ENCODE measurements at regions of chr18 and their contacts with region 1.

Region 1: DNA sequence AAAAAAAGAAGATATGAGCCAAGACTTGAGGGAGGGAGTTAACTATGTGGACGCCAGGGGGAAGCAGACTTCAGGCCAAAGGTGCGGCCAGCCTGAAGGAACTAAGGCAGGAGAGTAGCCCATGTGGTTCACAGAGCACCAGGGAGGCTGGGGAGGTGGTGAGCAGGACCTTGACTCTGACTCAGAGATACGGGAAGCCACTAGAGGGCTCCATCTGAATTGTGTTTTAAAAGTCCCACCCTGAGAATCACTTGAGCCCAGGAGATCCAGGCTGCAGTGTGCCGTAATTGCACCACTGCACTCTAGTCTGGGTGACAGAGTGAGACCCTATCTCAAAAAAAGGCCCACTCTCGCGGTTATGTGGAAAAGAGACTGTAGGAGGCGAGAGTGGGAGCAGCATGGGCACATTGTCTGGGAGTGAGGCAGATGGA is 12.3 kb downstream of the CEP192 start:
- DNase-seq: peak; percentile 29
- H3K4me3 ChIP-seq: no peak overlapping the region
- H3K27ac ChIP-seq: no peak overlapping the region
- H3K27me3 ChIP-seq: no peaks in the 10 kb centered on the region
- CTCF ChIP-seq: peak; percentile 57

Region 2: DNA sequence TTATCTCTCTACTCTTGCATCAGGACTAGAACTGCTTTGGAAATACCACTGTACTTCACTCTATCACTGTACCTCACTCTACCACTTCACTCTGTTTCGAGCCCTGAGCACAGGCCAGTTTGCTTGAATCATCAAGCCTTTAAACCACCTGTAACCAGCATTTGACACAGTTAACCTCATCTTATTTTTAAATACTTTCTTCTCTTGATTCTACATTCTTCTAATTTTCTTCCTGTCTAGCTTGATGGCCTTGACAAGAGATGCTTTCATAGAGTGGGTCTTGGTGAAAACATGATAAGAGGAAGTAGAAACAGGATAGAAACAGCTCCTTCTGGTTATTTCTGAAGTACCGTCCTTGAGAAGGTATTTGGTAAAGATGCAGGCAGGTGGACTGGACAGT is 423.7 kb before region 1 on chr18:
- CTCF ChIA-PET with region 1: no interaction called
- POLR2A ChIA-PET with region 1: no interaction called
- DNase-seq: no peak
- H3K4me3 ChIP-seq: no peak overlapping the region
- H3K27ac ChIP-seq: no peak overlapping the region
- H3K27me3 ChIP-seq: no peaks in the 10 kb centered on the region
- CTCF ChIP-seq: no peak

Region 3: GRCh38 chr18:12737243-12737902 is 266.1 kb before region 1 on chr18:
- CTCF ChIA-PET with region 1: interaction called, 10 read pairs
- POLR2A ChIA-PET with region 1: no interaction called
- DNase-seq: no peak
- H3K4me3 ChIP-seq: no peak overlapping the region
- H3K27ac ChIP-seq: no peak overlapping the region
- H3K27me3 ChIP-seq: no peaks in the 10 kb centered on the region
- CTCF ChIP-seq: no peak

Region 4: DNA sequence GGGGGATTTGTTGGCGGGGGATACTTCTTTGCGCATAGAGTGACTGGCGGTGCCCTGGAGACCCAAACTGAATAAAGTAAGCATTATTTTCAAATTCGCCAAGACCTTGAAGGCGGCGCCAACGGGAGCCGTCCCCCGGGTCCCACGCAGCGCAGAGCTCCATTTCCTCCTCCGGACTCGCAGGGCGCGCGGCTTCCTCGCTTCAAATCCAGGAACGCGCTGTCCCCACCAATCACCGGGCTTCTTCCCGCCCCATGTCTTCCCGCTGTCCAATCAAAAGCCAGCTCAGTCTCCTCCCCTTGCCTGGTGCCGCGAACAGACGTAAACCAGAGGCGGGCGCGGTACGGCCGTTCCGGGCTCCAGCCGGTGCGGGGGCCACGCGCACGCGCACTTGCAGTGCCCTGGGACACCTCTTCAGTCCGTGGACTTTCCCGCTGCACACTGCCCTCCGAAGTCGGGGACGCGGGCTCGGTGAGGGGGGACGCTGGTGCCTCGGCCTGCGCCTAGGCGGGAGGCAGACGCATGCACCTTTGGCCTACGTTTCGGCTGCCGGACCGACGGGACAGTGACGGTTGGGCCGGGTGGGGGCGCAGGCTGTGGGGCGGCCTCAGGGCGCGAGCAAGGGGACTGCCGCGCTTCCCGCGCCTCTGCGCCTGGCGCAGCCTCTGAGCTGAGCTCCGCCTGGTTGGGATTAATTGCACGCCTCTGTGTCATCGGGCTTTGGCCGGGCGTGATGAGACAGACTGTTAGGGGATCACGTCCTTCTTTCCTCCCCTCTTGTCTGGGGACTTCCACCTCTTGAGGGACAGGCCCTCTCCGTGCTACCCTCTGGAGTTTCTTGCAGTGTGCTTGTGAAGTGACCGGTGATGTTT is 12.3 kb before region 1 on chr18 and contains the start of gene CEP192:
- CTCF ChIA-PET with region 1: interaction called, 12 read pairs
- POLR2A ChIA-PET with region 1: no interaction called
- DNase-seq: peak; percentile 96
- H3K4me3 ChIP-seq: peak within 1 kb of the TSS; percentile 96
- H3K27ac ChIP-seq: peak within 1 kb of the TSS; percentile 83
- H3K27me3 ChIP-seq: no peaks in the 10 kb centered on the region
- CTCF ChIP-seq: no peak
- polyA plus RNA-seq, gene CEP192: 16.9 and 21.1 TPM in 2 replicates

Region 5: DNA sequence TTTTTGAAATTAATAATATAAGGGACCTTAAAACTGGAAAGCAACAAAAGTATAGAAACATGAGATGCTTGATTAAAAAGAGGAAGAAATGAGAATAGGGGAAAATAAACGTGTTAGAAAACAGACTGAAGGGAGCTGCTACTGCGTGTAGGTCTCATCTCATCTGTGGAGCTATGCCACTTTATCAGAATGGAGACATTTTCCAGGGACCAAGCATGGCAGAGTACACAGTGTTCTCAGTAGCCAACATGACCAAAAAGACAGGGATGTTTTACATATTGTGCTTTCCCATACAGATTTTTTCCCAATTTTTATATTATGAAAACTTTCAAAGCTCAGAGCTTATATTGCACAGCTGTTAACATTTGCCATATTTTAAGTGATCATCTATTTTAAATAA is 10.8 kb after region 1 on chr18:
- CTCF ChIA-PET with region 1: interaction called, 12 read pairs
- POLR2A ChIA-PET with region 1: no interaction called
- DNase-seq: no peak
- H3K4me3 ChIP-seq: no peak overlapping the region
- H3K27ac ChIP-seq: no peak overlapping the region
- H3K27me3 ChIP-seq: no peaks in the 10 kb centered on the region
- CTCF ChIP-seq: no peak